Upper lobe of right lung (tissue), 1 donor: ENCODE measurements at regions of chr9 and their contacts with region 1.

Region 1: DNA sequence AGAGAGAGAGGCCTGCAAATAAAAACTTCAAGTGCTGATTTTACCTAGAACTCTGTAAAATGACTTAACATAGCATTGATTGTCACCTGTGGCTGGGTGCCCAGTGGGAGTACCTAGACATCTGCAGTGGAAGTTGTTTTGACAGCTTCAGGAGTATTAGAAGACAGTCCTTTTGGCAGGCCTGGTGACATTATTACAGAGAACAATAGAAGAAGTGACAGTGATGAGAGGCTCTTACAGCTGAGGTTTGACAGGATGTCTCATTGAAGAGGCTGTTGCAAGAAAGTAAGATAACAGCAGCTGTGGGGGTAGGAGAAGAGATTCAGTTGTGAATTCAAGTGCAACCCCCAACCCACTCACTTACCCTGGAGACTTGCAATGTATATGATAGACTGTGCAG is 27.9 kb upstream of the MUSK start:
- DNase-seq: no peak
- ATAC-seq: no peak
- H3K4me3 ChIP-seq: no peak overlapping the region
- H3K27ac ChIP-seq: no peak overlapping the region
- H3K4me1 ChIP-seq: no peaks in the 10 kb centered on the region
- H3K27me3 ChIP-seq: no peaks in the 10 kb centered on the region
- CTCF ChIP-seq: no peak

Region 2: GRCh38 chr9:110476251-110476650 is 164.5 kb before region 1 on chr9:
- intact Hi-C with region 1: no loop called
- DNase-seq: no peak
- ATAC-seq: no peak
- H3K4me3 ChIP-seq: no peak overlapping the region
- H3K27ac ChIP-seq: no peak overlapping the region
- H3K4me1 ChIP-seq: no peaks in the 10 kb centered on the region
- H3K27me3 ChIP-seq: no peaks in the 10 kb centered on the region
- CTCF ChIP-seq: no peak

Region 3: GRCh38 chr9:110579862-110580219 is 60.9 kb before region 1 on chr9:
- intact Hi-C with region 1: no loop called
- DNase-seq: no peak
- ATAC-seq: peak; percentile 41
- H3K4me3 ChIP-seq: peak overlapping the region; percentile 57
- H3K27ac ChIP-seq: peak overlapping the region; percentile 82
- H3K4me1 ChIP-seq: no peaks in the 10 kb centered on the region
- H3K27me3 ChIP-seq: peaks cover 26% of the 10 kb centered on the region
- CTCF ChIP-seq: no peak

Region 4: DNA sequence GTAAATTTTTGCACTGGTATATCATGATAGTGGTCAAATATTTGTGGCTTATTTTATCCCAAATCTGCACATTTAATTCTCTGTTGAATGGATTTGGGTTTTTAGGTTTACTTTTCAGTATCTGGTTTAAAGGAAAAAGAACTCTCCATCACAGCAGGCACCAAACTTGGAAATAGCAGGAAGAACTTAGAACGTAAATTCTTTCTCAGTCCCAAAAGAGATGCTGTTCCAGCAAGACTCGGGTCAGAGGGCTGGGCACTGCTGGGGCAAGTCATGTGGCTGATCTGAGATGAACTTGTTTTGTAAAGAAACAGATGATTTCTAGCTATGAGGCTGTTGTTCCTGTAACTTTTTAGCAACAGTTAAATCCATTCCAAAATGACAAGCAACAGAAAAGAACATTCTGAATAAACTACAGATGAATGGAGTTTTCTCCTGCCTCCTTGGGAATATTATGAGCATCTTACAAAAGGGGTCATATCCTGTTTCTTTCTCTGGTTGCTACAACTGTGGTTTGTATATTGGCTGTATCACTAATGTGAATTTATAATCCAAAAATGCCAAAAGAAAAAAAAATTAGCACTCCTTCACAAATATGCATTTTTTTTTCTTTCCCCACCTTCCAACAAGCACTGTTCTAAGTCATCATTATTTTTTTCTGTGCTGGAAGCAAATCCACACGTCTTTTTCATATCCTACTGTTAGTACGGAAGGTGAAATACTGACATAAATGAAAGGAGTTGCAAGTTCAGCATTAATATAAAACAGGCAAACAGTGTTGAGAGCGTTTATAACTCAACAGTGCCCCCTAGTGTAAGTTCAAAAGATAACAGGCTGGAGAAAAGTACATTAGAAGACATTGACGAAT is 658.2 kb after region 1 on chr9:
- intact Hi-C with region 1: loop called (anchors 10 kb)
- DNase-seq: no peak
- ATAC-seq: peak; percentile 90
- H3K4me3 ChIP-seq: no peak overlapping the region
- H3K27ac ChIP-seq: peak overlapping the region; percentile 48
- H3K4me1 ChIP-seq: no peaks in the 10 kb centered on the region
- H3K27me3 ChIP-seq: no peaks in the 10 kb centered on the region
- CTCF ChIP-seq: peak; percentile 80